ENCODE measurements at regions of chr13 and their contacts with region 1.

Region 1: GRCh38 chr13:30371649-30372265 is 50.5 kb upstream of the UBE2L5 start:
- DNase-seq: peak; percentile 83 to 93 (median 88)
- H3K4me3 ChIP-seq: peak overlapping the region in 1 of 2 donors; percentile 41
- H3K4me3 Mint-ChIP-seq: peak overlapping the region; percentile 66 to 95 (median 87)
- H3K27ac ChIP-seq: peak overlapping the region; percentile 43
- H3K27ac Mint-ChIP-seq: peak overlapping the region; percentile 94 to 99 (median 98)
- H3K4me1 ChIP-seq: peaks cover 90% of the 10 kb centered on the region
- H3K4me1 Mint-ChIP-seq: peaks cover 66 to 92% (median 80%) of the 10 kb centered on the region in 4 donors
- H3K27me3 ChIP-seq: no peaks in the 10 kb centered on the region
- H3K27me3 Mint-ChIP-seq: peaks cover 0 to 3% of the 10 kb centered on the region in 2 donors

Region 2: DNA sequence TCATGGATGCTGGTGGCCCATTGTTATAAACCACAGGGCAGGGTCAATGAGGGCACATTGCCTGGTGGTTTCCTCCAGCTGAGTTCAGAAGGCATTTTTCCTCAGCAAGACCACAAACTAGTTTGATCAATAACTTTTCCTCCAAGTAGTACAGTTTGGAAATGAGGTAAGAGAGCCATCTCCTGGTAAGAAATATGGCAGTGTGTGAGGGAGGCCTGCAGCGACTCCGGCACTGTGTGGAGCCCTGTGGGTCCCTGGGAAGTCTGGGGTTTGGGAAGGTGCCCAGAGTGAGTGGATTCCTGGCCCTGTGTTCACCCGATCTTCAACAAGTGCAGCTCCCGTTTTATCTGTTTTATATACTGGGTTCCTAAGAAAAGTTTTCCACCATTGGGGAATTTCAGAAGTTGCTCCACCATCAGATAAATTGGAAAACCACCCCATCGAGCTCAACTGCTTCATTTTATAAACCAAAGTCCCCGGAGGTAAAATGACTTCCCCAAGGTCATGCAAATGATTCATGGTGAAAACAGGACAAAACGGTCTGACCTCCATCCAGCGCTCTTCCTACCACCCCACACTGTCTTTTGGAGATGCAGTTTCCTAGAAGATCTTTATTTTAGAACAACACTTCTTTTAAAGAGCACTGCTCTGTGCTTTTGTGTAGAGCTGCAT is 212.8 kb before region 1 on chr13:
- CTCF ChIA-PET with region 1: interaction called, 12 read pairs
- POLR2A ChIA-PET with region 1: no interaction called
- intact Hi-C with region 1: no loop called
- DNase-seq: peak in 4 of 5 donors; percentile 58 to 61 (median 60)
- H3K4me3 ChIP-seq: no peak overlapping the region
- H3K4me3 Mint-ChIP-seq: peak overlapping the region in 7 of 8 donors; percentile 17 to 69 (median 59)
- H3K27ac ChIP-seq: no peak overlapping the region
- H3K27ac Mint-ChIP-seq: peak overlapping the region in 5 of 7 donors; percentile 7 to 89 (median 74)
- H3K4me1 ChIP-seq: peaks cover 39% of the 10 kb centered on the region
- H3K4me1 Mint-ChIP-seq: peaks cover 26 to 61% (median 41%) of the 10 kb centered on the region in 4 donors
- H3K27me3 ChIP-seq: no peaks in the 10 kb centered on the region
- H3K27me3 Mint-ChIP-seq: no peaks in the 10 kb centered on the region

Region 3: DNA sequence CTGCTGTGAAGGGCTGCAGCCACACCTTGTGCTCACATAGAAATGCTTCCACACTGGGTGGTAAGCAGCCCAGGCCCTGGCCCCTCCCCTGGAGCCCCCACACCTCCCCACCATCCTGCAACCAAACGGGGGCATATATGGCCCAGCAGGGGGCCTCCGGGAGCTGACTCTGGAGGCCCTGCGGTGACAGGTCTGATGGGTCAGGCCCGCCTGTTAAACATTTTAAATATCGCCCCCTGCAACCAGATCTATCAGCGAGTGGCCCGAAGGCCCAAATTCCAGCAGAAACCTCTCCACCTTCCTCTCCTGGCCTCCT is 16.4 kb before region 1 on chr13:
- CTCF ChIA-PET with region 1: interaction called, 7 read pairs
- POLR2A ChIA-PET with region 1: interaction called, 12 read pairs
- intact Hi-C with region 1: no loop called
- DNase-seq: no peak
- H3K4me3 ChIP-seq: no peak overlapping the region
- H3K4me3 Mint-ChIP-seq: no peak overlapping the region
- H3K27ac ChIP-seq: no peak overlapping the region
- H3K27ac Mint-ChIP-seq: peak overlapping the region in 1 of 7 donors; percentile 52
- H3K4me1 ChIP-seq: peaks cover 5% of the 10 kb centered on the region
- H3K4me1 Mint-ChIP-seq: peaks cover 6 to 16% (median 10%) of the 10 kb centered on the region in 4 donors
- H3K27me3 ChIP-seq: no peaks in the 10 kb centered on the region
- H3K27me3 Mint-ChIP-seq: no peaks in the 10 kb centered on the region

Region 4: DNA sequence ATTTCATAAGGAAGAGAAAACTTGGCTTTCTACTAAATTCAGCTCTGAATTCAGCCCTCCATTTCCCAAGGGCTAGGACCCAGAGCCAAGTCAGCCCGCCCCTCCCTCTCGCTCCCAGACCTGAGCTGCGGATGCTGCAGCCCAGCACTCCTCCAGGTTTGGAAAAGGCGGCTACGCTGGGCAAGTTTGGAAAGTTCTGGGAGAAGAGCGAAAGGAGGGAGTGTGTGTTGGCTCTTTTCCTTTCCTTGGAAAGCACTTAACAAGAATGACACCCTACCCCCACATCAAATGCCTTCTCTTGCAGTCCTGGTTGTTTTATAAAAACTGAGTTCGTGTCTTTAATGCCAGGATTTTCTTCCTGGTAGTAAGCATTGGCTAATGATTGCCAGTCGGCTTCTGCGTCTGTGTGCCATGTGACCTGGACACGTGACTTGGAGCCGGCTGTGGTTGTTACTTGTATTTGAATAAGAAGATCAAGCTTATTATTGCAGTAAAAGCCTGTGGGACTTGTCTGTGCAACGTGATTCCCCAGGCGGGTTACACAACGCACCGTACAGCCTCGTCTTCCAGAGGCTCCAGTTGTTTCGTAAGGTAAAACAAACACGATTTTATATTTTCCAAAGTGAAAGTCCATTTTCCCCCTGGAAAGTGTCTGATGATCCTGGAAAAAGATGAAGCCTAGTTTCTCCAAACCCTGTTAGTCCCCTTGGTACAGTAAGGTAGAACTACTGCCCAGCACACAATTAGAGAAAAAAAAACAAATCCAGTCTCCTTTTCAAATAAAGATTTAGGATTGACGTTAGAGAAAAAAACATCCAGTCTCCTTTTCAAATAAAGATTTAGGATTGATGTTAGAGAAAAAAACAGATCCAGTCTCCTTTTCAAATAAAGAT is 23.7 kb after region 1 on chr13:
- CTCF ChIA-PET with region 1: interaction called, 136 read pairs
- POLR2A ChIA-PET with region 1: interaction called, 401 read pairs
- intact Hi-C with region 1: loop called (anchors 1 kb)
- DNase-seq: peak; percentile 67 to 90 (median 75)
- H3K4me3 ChIP-seq: peak overlapping the region; percentile 87 to 90
- H3K4me3 Mint-ChIP-seq: peak overlapping the region; percentile 89 to 97 (median 91)
- H3K27ac ChIP-seq: peak overlapping the region; percentile 69
- H3K27ac Mint-ChIP-seq: peak overlapping the region; percentile 84 to 97 (median 95)
- H3K4me1 ChIP-seq: peaks cover 36% of the 10 kb centered on the region
- H3K4me1 Mint-ChIP-seq: peaks cover 19 to 61% (median 38%) of the 10 kb centered on the region in 4 donors
- H3K27me3 ChIP-seq: no peaks in the 10 kb centered on the region
- H3K27me3 Mint-ChIP-seq: no peaks in the 10 kb centered on the region

Region 5: GRCh38 chr13:30422054-30422839 is 50.5 kb after region 1 on chr13 and contains the start of gene UBE2L5:
- CTCF ChIA-PET with region 1: interaction called, 6 read pairs
- POLR2A ChIA-PET with region 1: interaction called, 22 read pairs
- intact Hi-C with region 1: loop called (anchors 1 kb)
- DNase-seq: peak; percentile 68 to 77 (median 71)
- H3K4me3 ChIP-seq: peak within 1 kb of the TSS; percentile 42 to 58
- H3K4me3 Mint-ChIP-seq: peak within 1 kb of the TSS; percentile 81 to 94 (median 88)
- H3K27ac ChIP-seq: peak within 1 kb of the TSS; percentile 1
- H3K27ac Mint-ChIP-seq: peak within 1 kb of the TSS; percentile 78 to 93 (median 87)
- H3K4me1 ChIP-seq: peaks cover 19% of the 10 kb centered on the region
- H3K4me1 Mint-ChIP-seq: peaks cover 13 to 27% (median 18%) of the 10 kb centered on the region in 4 donors
- H3K27me3 ChIP-seq: no peaks in the 10 kb centered on the region
- H3K27me3 Mint-ChIP-seq: no peaks in the 10 kb centered on the region
- total RNA-seq, gene UBE2L5: not detected

Region 6: DNA sequence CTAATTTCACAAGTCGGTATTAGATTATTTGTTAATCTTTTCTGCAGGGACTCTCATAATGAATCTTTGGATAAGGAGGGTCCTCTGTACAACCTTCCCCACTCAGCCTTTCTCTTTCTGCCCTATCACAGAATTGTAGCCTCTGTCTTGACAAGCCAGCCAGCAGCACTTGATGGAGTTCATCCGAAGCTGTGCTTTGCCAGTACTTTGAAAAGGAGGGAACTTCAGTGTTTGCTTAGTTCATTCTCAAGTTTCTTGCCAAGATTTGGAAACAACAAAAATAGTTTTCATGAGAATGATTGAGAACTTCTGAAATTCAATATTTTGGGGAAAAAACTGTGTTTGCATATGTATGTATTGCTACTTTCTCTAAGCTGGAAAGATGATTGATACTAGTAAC is 163.3 kb after region 1 on chr13:
- CTCF ChIA-PET with region 1: no interaction called
- POLR2A ChIA-PET with region 1: no interaction called
- intact Hi-C with region 1: no loop called
- DNase-seq: no peak
- H3K4me3 ChIP-seq: no peak overlapping the region
- H3K4me3 Mint-ChIP-seq: no peak overlapping the region
- H3K27ac ChIP-seq: no peak overlapping the region
- H3K27ac Mint-ChIP-seq: no peak overlapping the region
- H3K4me1 ChIP-seq: no peaks in the 10 kb centered on the region
- H3K4me1 Mint-ChIP-seq: no peaks in the 10 kb centered on the region
- H3K27me3 ChIP-seq: no peaks in the 10 kb centered on the region
- H3K27me3 Mint-ChIP-seq: no peaks in the 10 kb centered on the region